Panc1 (cell line): ENCODE measurements at regions of chrX and their contacts with region 1.

Region 1: GRCh38 chrX:101260431-101260830 is 30.7 kb downstream of the TAF7L start:
- DNase-seq: no peak
- ATAC-seq: peak; percentile 96
- H3K4me3 ChIP-seq: no peak overlapping the region
- H3K27ac ChIP-seq: no peak overlapping the region
- H3K4me1 ChIP-seq: no peaks in the 10 kb centered on the region
- H3K27me3 ChIP-seq: no peaks in the 10 kb centered on the region
- CTCF ChIP-seq: peak; percentile 80

Region 2: GRCh38 chrX:101287402-101287801 is 27.0 kb after region 1 on chrX:
- CTCF ChIA-PET with region 1: no interaction called
- POLR2A ChIA-PET with region 1: no interaction called
- in situ Hi-C with region 1: no loop called
- intact Hi-C with region 1: loop called (anchors 1 kb)
- DNase-seq: peak; percentile 52
- ATAC-seq: peak; percentile 84
- H3K4me3 ChIP-seq: no peak overlapping the region
- H3K27ac ChIP-seq: no peak overlapping the region
- H3K4me1 ChIP-seq: no peaks in the 10 kb centered on the region
- H3K27me3 ChIP-seq: no peaks in the 10 kb centered on the region; the same call in 1 of the 2 replicates
- CTCF ChIP-seq: peak; percentile 68; the same call in 1 of the 2 replicates

Region 3: DNA sequence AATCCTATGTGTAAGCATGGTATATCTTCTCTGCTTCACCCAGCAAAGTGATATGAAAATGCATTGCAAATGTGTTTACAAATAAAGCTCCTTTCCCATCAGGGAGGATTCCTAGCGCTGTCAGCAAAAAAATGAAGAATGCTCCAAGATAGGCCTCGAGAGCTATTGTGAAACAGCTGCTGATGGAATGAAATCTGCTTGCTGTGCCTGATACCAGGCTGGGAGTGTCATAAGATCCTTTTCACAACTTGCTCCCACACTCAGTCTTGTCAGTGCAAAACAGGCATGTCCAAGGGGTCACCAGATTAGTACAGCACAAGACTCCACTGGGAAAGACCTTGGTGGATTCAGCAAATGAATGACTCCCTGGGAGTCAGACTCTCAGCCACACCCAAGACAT is 181.7 kb after region 1 on chrX:
- CTCF ChIA-PET with region 1: no interaction called
- POLR2A ChIA-PET with region 1: no interaction called
- in situ Hi-C with region 1: no loop called
- intact Hi-C with region 1: no loop called
- DNase-seq: no peak
- ATAC-seq: no peak
- H3K4me3 ChIP-seq: no peak overlapping the region
- H3K27ac ChIP-seq: no peak overlapping the region
- H3K4me1 ChIP-seq: no peaks in the 10 kb centered on the region
- H3K27me3 ChIP-seq: no peaks in the 10 kb centered on the region
- CTCF ChIP-seq: no peak